IMR-90 (cell line): ENCODE measurements at regions of chr21 and their contacts with region 1.

Region 1: DNA sequence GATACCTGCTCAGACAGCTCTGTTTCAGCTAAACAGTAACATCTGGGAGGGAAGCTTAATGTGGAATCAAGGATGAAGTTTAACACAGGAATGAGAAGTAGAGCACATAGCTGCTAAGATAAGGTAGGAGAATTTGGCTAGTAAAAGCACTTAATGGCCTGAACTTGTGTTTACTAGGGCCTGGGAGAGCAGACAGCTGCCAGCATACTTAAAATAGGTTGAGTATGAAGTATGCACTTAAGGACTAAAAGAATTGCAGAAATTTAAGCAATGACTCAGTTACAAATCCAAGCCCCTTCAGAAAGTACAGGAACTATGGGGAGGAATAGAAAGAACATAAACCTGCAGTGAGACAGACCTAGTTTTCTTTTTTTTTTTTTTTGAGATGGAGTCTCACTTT is 53.0 kb downstream of the BACH1 start:
- DNase-seq: peak; percentile 91
- ATAC-seq: peak; percentile 82
- H3K4me3 ChIP-seq: no peak overlapping the region
- H3K27ac ChIP-seq: peak overlapping the region; percentile 62
- H3K4me1 ChIP-seq: peaks cover 32% of the 10 kb centered on the region
- H3K27me3 ChIP-seq: no peaks in the 10 kb centered on the region
- CTCF ChIP-seq: no peak
- POLR2A ChIP-seq: no peak
- RAD21 ChIP-seq: no peak

Region 2: DNA sequence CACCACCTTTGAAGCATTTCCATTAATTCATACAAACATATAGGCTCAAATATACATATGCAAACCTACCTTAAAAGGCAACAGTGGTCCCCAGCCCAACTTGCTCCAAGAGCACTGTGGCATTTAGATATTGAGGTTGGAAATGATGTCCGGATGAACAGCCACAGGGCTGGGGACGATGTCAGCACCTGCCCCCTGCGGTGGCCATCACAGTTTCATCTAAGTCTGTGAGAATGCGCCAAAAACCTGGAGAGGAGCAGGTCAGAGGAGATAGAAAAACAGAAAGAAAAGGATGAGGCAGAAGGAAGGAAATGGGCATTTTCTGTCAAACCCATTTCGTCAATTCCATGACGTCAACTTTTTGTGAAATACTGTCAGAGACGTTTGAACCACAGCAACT is 1925.0 kb after region 1 on chr21:
- CTCF ChIA-PET with region 1: no interaction called
- POLR2A ChIA-PET with region 1: interaction called, 10 read pairs
- dilution Hi-C with region 1: no loop called
- in situ Hi-C with region 1: no loop called
- intact Hi-C with region 1: no loop called
- DNase-seq: no peak
- ATAC-seq: no peak
- H3K4me3 ChIP-seq: no peak overlapping the region
- H3K27ac ChIP-seq: no peak overlapping the region
- H3K4me1 ChIP-seq: no peaks in the 10 kb centered on the region; the same call in 1 of the 2 replicates
- H3K27me3 ChIP-seq: no peaks in the 10 kb centered on the region
- CTCF ChIP-seq: no peak
- POLR2A ChIP-seq: no peak
- RAD21 ChIP-seq: no peak